ENCODE measurements at regions of chr7 and their contacts with region 1.

Region 1: GRCh38 chr7:66330961-66331360 is 125.8 kb downstream of the TPST1 start:
- DNase-seq: peak; percentile 52
- ATAC-seq: peak; percentile 26; the same call in 1 of the 2 replicates
- H3K4me3 ChIP-seq: no peak overlapping the region
- H3K27ac ChIP-seq: peak overlapping the region; percentile 27; the same call in 1 of the 2 replicates
- H3K4me1 ChIP-seq: peaks cover 10% of the 10 kb centered on the region
- H3K27me3 ChIP-seq: no peaks in the 10 kb centered on the region
- CTCF ChIP-seq: no peak
- POLR2A ChIP-seq: no peak
- RAD21 ChIP-seq: no peak

Region 2: DNA sequence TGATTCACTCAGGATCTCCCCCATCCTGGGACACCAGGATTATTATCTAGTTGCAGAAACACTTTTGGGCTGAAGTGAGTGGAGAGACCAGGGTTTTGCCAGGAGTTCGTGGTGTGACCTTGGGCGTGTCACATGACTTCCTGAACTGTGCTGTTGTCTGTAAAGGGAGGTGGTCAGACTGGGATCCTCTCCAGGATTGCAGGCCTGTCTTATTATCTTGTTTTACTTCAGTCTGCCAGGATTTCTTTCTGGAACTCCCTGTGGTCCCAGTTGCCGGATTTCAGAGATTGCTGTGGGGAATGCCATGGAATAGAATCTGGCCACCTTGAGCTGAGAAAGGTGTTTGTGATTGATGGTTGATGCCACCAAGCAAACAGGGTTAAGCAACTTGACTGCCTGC is 180.5 kb before region 1 on chr7:
- CTCF ChIA-PET with region 1: no interaction called
- POLR2A ChIA-PET with region 1: no interaction called
- dilution Hi-C with region 1: no loop called
- in situ Hi-C with region 1: no loop called
- intact Hi-C with region 1: loop called (anchors 5 kb)
- DNase-seq: peak; percentile 76
- ATAC-seq: peak; percentile 5; the same call in 1 of the 2 replicates
- H3K4me3 ChIP-seq: no peak overlapping the region
- H3K27ac ChIP-seq: peak overlapping the region; percentile 68; the same call in 1 of the 2 replicates
- H3K4me1 ChIP-seq: peaks cover 35% of the 10 kb centered on the region
- H3K27me3 ChIP-seq: no peaks in the 10 kb centered on the region
- CTCF ChIP-seq: no peak
- POLR2A ChIP-seq: no peak
- RAD21 ChIP-seq: no peak

Region 3: DNA sequence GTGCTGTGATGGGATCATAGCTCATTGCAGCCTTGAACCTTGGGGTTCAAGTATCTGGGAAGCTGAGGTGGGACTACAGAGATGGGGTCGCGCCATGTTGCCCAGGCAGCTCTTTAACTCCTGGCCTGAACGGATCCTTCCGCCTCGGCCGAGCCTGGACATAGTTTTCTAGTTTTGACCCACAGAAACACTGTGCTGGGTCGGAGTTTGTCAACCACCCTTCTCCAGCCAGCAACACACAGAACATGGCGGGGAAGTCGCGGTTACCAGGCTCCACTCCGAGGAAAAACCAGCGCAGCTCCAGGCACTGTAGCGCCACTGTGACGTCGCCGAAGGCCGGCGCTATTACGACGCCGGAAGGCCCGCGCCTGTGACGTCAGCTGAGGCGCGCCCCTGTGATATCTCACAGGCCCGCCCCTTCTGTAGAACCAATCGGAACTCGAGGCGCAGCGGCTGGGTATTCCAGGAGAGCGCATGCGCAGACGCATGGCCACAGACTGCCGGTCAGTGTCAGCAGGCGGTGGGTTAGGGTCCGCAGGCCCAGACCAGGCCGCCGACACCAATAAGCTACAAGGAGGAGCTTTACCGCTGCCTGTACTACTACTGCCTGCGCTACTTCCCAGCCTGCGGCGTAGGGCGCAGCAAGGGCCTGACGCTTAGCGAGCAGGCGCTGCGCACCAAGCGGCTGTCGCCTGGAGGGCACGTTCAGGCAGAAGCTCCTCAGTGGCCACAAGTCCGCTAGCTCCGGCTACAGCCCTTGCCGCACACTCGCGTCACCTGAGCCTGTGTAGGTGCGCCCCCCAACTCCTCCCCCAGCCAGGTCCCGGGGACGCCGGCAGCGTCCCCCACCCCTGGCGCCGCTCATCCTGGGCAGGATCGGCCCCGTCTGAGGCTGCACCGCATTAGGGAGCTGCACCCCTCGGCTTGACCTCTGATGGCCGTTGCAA is 162.5 kb after region 1 on chr7:
- CTCF ChIA-PET with region 1: no interaction called
- POLR2A ChIA-PET with region 1: no interaction called
- dilution Hi-C with region 1: no loop called
- in situ Hi-C with region 1: no loop called
- intact Hi-C with region 1: loop called (anchors 2 kb)
- DNase-seq: peak; percentile 97
- ATAC-seq: peak; percentile 97
- H3K4me3 ChIP-seq: peak overlapping the region; percentile 72
- H3K27ac ChIP-seq: peak overlapping the region; percentile 89
- H3K4me1 ChIP-seq: peaks cover 2% of the 10 kb centered on the region; the same call in 1 of the 2 replicates
- H3K27me3 ChIP-seq: no peaks in the 10 kb centered on the region
- CTCF ChIP-seq: no peak
- POLR2A ChIP-seq: peak; percentile 80
- RAD21 ChIP-seq: peak; percentile 27; the same call in 1 of the 2 replicates

Region 4: DNA sequence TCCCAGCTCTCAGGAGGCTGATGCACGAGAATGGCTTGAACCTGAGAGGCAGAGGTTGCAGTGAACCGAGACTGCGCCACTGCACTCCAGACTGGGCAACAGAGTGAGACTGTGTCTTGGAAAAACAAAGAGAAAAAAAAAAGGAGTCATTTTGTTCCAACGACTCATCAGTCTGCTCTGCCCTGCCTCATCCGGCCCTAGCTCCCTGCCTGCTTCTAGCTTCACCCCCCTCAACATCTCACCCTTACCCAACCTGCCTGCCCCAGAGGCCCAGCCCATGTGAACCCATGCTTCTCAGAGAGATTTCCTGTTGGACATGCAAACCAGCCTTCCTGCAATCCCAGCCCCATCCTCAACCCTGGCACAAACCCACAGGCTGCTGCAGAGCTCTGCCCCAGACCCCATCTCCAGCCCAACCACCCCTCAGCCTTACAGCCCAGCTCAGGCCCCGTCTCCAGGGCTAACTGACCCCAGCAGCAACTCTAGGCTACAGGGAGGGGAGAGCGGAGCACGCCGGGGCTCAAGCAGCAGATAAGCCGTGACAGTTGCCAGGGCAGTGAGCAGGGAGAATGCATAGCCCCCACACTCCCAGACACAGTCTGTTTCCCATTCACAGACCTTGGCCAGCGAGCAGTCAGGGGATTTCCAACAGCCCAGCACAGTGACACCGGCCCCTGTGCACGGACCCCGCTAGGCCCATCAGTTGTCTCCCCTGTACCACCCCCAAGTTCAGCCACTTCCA is 211.7 kb after region 1 on chr7:
- CTCF ChIA-PET with region 1: no interaction called
- POLR2A ChIA-PET with region 1: no interaction called
- dilution Hi-C with region 1: no loop called
- in situ Hi-C with region 1: no loop called
- intact Hi-C with region 1: no loop called
- DNase-seq: peak; percentile 48
- ATAC-seq: peak; percentile 77
- H3K4me3 ChIP-seq: no peak overlapping the region
- H3K27ac ChIP-seq: peak overlapping the region; percentile 6
- H3K4me1 ChIP-seq: peaks cover 4% of the 10 kb centered on the region; the same call in 1 of the 2 replicates
- H3K27me3 ChIP-seq: no peaks in the 10 kb centered on the region
- CTCF ChIP-seq: no peak
- POLR2A ChIP-seq: no peak
- RAD21 ChIP-seq: no peak

Region 5: DNA sequence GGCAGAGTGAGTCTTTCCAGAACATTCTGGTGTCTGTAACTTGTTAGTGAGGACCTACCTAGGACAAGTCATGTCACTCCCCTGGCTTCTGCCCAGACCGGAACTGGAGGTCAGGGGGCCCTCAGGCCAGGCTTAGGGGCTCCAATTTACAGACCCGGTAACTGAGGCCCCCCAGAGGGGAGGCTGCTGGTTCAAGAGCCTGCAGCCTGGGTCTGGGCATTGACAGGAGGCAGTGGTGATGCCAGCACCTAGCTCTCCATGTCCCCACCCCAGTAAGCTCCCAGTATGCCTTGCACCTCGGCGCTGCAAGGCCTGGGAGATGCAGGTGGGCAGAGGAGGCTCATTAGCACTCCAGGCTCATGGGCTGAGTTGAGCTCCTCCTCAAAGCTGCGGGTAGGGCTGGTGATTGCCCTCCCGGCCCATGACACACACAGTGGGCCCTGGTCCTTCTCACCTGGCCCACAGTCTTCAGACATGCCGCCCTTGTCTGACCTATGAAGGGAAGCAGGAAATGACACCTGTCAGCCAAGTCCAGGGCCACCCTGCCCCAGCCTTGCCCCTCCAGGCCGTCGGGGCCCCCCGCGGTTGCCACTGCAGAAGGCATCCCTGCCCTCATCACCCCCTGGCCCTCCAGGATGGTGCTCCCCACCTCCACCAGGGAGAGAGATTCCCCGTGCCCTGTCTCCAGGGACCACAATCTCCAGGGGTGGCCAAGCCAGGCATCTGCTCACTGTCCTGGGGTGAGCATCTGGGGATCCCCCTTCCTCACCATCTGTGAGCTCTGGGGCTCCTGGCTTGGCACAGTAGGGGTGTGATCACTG is 501.8 kb after region 1 on chr7:
- CTCF ChIA-PET with region 1: no interaction called
- POLR2A ChIA-PET with region 1: no interaction called
- dilution Hi-C with region 1: no loop called
- in situ Hi-C with region 1: no loop called
- intact Hi-C with region 1: no loop called
- DNase-seq: no peak
- ATAC-seq: no peak
- H3K4me3 ChIP-seq: no peak overlapping the region
- H3K27ac ChIP-seq: no peak overlapping the region
- H3K4me1 ChIP-seq: no peaks in the 10 kb centered on the region
- H3K27me3 ChIP-seq: no peaks in the 10 kb centered on the region
- CTCF ChIP-seq: no peak
- POLR2A ChIP-seq: no peak
- RAD21 ChIP-seq: no peak